Ovary (tissue), 10 donors: ENCODE measurements at regions of chr12 and their contacts with region 1.

Region 1: GRCh38 chr12:48414021-48414420 is 58.3 kb upstream of the ANP32D start:
- DNase-seq: peak in 2 of 5 donors; percentile 18 to 31
- H3K4me3 ChIP-seq: no peak overlapping the region
- H3K27ac ChIP-seq: peak overlapping the region in 1 of 2 donors; percentile 16
- H3K4me1 ChIP-seq: peaks cover 6% of the 10 kb centered on the region
- H3K27me3 ChIP-seq: no peaks in the 10 kb centered on the region
- CTCF ChIP-seq: no peak
- EP300 ChIP-seq: no peak
- POLR2A ChIP-seq: no peak

Region 2: DNA sequence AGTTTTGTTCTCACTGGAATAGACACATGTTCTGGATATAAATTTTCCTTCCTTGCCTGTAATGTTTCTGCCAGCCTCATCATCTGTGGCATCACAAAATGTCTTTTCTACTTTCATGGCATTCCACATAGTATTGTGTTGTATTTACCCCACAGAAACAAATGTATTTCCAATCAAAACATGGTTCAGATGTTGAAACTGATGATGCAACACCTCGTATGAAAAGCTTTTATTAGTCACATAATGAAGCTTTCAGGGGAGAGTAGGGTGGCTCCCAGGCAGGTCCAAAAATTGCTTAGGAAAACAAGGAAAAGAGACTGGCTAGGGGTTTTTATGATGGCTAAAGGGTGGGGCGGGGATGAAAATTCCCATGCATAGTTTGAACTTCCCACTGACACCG is 34.2 kb before region 1 on chr12:
- intact Hi-C with region 1: no loop called
- DNase-seq: no peak
- H3K4me3 ChIP-seq: no peak overlapping the region
- H3K27ac ChIP-seq: no peak overlapping the region
- H3K4me1 ChIP-seq: no peaks in the 10 kb centered on the region
- H3K27me3 ChIP-seq: no peaks in the 10 kb centered on the region
- CTCF ChIP-seq: no peak
- EP300 ChIP-seq: no peak
- POLR2A ChIP-seq: no peak

Region 3: GRCh38 chr12:48489012-48489411 is 75.0 kb after region 1 on chr12:
- intact Hi-C with region 1: loop called in 1 of 4 experiments (anchors 10 kb)
- DNase-seq: no peak
- H3K4me3 ChIP-seq: no peak overlapping the region
- H3K27ac ChIP-seq: no peak overlapping the region
- H3K4me1 ChIP-seq: no peaks in the 10 kb centered on the region
- H3K27me3 ChIP-seq: no peaks in the 10 kb centered on the region
- CTCF ChIP-seq: no peak
- EP300 ChIP-seq: no peak
- POLR2A ChIP-seq: no peak

Region 4: GRCh38 chr12:48901278-48901677 is 487.3 kb after region 1 on chr12:
- intact Hi-C with region 1: no loop called
- DNase-seq: no peak
- H3K4me3 ChIP-seq: no peak overlapping the region
- H3K27ac ChIP-seq: no peak overlapping the region
- H3K4me1 ChIP-seq: peaks cover 3% of the 10 kb centered on the region
- H3K27me3 ChIP-seq: no peaks in the 10 kb centered on the region
- CTCF ChIP-seq: no peak
- EP300 ChIP-seq: no peak
- POLR2A ChIP-seq: no peak